ENCODE measurements at regions of chr4 and their contacts with region 1.

Region 1: DNA sequence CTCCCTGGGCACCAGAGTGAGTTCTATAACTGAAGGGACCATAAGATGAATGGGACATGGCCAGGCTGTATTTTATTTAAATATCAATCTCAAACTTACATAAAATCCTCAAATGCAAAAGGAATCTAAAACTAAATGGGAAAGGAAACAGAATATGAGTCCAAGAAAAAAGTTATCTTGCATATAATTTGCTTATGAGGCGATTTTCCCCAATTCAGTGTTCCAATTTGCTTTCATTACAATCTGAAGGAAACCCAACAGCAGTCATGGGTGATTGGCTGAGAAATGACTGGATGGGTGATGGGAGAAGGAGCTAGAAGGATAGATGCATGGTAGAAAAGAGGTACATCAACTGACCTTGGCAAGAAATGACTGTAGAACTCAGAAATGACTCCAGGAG is 511.3 kb upstream of the TENM3 start:
- DNase-seq: no peak
- ATAC-seq: no peak
- H3K4me3 ChIP-seq: no peak overlapping the region
- H3K27ac ChIP-seq: no peak overlapping the region
- H3K4me1 ChIP-seq: no peaks in the 10 kb centered on the region
- H3K27me3 ChIP-seq: no peaks in the 10 kb centered on the region; a peak in 1 of 5 replicates
- CTCF ChIP-seq: no peak
- EP300 ChIP-seq: no peak
- POLR2A ChIP-seq: no peak
- RAD21 ChIP-seq: no peak

Region 2: GRCh38 chr4:180493299-180493698 is 1238.6 kb before region 1 on chr4:
- CTCF ChIA-PET with region 1: no interaction called
- POLR2A ChIA-PET with region 1: no interaction called
- in situ Hi-C with region 1: no loop called
- intact Hi-C with region 1: loop called (anchors 5 kb)
- DNase-seq: no peak
- ATAC-seq: no peak
- H3K4me3 ChIP-seq: no peak overlapping the region
- H3K27ac ChIP-seq: no peak overlapping the region
- H3K4me1 ChIP-seq: no peaks in the 10 kb centered on the region
- H3K27me3 ChIP-seq: no peaks in the 10 kb centered on the region
- CTCF ChIP-seq: no peak
- EP300 ChIP-seq: no peak
- POLR2A ChIP-seq: no peak
- RAD21 ChIP-seq: no peak

Region 3: DNA sequence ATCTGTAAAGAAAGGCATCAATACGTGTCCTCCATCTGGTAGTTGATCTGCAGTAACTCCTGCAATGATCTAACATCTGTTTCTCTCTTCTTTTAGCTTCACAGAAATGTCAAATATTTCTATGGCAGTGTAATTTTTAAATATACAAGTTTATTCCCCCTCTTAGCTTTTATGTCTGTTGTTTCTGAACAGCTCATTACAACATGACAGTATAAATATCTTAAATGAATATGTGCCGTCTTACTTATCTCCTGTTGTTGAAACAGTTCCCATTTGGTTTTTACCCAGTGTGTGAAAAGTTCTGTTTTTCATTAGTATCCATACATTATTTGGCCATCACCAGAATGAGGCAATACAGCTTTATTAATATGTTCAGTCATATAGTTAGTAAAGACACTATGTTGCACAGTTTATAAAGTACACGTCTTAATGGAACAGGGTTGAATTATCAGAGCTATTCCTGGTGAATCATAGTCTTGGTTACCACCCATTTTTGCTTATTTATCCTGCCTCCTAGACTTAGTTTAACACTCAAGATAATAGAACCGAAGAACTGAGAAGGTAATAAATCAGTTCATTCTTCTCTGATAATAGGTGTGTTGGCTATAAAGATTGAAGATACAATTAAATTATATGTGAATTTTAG is 832.9 kb after region 1 on chr4:
- CTCF ChIA-PET with region 1: no interaction called
- POLR2A ChIA-PET with region 1: no interaction called
- in situ Hi-C with region 1: no loop called
- intact Hi-C with region 1: no loop called
- DNase-seq: no peak
- ATAC-seq: no peak
- H3K4me3 ChIP-seq: no peak overlapping the region
- H3K27ac ChIP-seq: no peak overlapping the region
- H3K4me1 ChIP-seq: no peaks in the 10 kb centered on the region
- H3K27me3 ChIP-seq: peaks cover 0 to 5% of the 10 kb centered on the region in 2 experiments; a peak in 2 of 5 replicates
- CTCF ChIP-seq: no peak
- EP300 ChIP-seq: no peak
- POLR2A ChIP-seq: no peak
- RAD21 ChIP-seq: no peak